Esophagus muscularis mucosa (tissue), 4 donors: ENCODE measurements at regions of chr15 and their contacts with region 1.

Region 1: DNA sequence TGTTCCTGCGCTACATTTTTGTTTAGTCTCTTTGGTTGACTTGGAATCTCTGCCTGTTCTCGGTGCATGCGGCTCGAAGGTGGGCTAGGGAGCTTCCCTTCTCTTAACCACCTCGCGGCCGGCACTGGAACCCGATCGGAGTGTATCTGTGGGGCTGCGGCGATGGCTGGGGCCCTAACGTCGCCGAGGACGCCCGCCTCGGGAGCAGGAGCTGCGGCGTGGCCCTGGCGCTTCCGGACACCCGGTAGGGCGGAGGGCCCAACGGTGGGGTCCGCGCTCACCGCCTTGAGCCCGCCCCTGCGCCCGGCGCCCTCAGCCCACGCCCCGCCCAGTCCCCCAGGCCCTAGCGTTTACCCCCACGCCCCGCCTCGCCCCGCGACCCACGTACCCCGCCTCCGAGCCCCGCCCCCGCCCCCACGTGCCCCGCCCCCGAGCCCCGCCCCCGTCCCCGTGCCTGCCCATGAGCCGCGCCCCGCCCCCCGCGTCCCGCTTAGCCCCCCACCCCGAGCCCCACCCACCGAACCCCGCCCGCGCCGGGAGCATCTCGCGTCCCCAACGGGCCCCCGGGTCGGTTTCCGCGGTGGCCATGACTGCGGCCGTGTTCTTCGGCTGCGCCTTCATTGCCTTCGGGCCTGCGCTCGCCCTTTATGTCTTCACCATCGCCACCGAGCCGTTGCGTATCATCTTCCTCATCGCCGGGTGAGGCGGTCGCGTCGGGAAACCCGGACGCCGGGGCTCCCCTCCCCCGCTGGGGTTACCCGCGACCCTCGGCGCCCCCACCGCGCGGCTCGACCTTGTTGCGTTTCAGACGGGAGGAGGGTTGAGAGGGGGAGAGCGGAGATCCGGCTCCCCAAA is at the start of gene APH1B:
- DNase-seq: peak; percentile 97
- H3K4me3 ChIP-seq: peak within 1 kb of the TSS; percentile 70 to 98 (median 94)
- H3K27ac ChIP-seq: peak within 1 kb of the TSS; percentile 85 to 94 (median 92)
- H3K4me1 ChIP-seq: peaks cover 5 to 20% (median 15%) of the 10 kb centered on the region in 4 donors
- H3K27me3 ChIP-seq: no peaks in the 10 kb centered on the region
- CTCF ChIP-seq: peak in 1 of 3 experiments; percentile 5
- EP300 ChIP-seq: no peak
- POLR2A ChIP-seq: peak; percentile 25
- total RNA-seq, gene APH1B: 7.5 to 9.4 (median 8.9) TPM

Region 2: DNA sequence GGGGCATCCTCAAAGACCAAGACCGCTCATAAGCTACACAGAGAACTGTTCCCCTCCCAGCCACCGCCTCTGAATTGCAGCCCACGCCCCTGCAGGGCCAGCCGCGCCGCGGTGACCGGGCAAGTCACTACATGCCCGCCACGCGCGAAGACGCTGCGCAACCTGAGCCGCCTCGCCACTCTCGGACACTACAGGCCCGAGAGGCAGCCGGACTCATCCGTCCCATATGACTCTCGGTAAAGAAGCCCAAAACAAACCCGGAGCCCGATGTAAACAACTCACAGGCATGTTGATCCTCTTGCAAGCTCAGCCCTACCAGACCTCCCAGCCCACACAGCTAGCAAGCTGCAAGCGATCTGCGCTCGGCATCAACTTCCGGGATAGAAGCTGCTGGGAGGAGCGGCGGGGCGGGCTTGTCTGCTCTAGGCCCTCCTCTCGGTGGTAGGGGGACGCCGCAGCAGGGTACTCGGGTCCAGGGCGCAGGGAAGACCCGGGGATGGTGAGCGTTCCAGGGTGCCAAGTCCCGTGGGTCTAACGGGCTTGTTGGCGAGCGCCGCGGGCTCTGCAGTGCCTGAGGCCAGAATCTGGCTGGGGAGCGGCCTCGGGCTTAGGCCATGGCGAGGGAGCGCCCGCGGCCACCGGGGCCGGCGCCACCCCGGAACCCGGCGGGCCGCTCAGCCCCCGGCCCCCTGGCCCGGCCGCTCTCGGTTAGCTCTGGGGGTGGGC is 120.0 kb before region 1 on chr15 and contains the start of gene RPS27L:
- intact Hi-C with region 1: loop called (anchors 10 kb)
- DNase-seq: peak; percentile 97
- H3K4me3 ChIP-seq: peak within 1 kb of the TSS; percentile 68 to 89 (median 82)
- H3K27ac ChIP-seq: peak within 1 kb of the TSS; percentile 90 to 97 (median 94)
- H3K4me1 ChIP-seq: peaks cover 18 to 30% (median 25%) of the 10 kb centered on the region in 4 donors
- H3K27me3 ChIP-seq: no peaks in the 10 kb centered on the region
- CTCF ChIP-seq: peak in 1 of 3 experiments; percentile 2
- EP300 ChIP-seq: no peak
- POLR2A ChIP-seq: peak; percentile 70
- total RNA-seq, gene RPS27L: 120 to 220 (median 172) TPM

Region 3: GRCh38 chr15:63191895-63192618 is 85.2 kb before region 1 on chr15:
- intact Hi-C with region 1: loop called (anchors 5 kb)
- DNase-seq: no peak
- H3K4me3 ChIP-seq: no peak overlapping the region
- H3K27ac ChIP-seq: no peak overlapping the region
- H3K4me1 ChIP-seq: peaks cover 25 to 75% (median 67%) of the 10 kb centered on the region in 4 donors
- H3K27me3 ChIP-seq: no peaks in the 10 kb centered on the region
- CTCF ChIP-seq: no peak
- EP300 ChIP-seq: no peak
- POLR2A ChIP-seq: no peak